Dendritic cell treated with granulocyte-macrophage colony-stimulating factor and Interleukin-4, amounts not matched to agents 40 ng/mL and 50 ng/mL, for 4 days (primary cell): ENCODE measurements at regions of chr2 and their contacts with region 1.

Region 1: DNA sequence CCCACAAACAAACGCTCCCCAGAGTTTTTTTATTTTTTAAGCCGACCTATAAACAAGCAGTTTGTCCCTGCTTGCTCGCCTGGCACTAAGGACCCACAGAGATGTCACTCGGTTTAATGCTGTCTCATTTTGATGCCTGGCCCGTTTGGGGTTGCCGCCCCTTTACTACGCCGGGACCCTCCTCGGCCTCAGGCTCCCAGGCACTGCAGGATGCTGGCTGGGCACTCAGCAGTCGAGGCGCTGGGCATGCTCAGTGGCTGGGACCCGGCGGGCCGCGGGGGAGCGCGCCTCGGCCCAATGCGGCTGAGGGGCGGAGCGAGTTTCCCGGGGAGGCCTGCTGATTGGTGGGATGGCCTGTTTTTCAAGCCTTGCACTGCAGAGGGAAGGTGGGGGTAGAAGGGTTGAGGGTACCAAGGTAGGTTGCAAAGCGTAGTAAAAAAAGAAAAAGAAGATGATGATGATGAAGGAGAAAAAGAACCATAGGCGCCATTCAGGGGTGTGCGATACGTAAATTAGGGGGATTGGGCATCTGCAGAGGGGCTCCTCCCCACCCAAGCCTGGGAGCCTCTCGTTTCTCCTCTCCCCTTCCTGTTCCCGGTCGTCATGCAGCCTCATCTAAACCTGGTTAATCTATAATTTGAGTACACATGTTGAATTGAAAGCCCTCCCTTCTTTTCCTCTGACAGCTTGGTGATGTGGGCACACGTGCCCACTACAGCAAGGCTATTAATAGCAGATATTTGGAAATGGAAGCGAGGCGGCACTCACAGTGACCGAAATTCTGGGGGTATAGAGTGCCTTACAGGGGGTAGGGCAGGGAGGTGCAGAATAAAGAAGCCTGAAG is 1.5 kb upstream of the IRS1 start:
- H3K4me3 Mint-ChIP-seq: peak overlapping the region; percentile 47
- H3K27ac Mint-ChIP-seq: no peak overlapping the region
- H3K4me1 Mint-ChIP-seq: peaks cover 32% of the 10 kb centered on the region
- H3K27me3 Mint-ChIP-seq: peaks cover 71% of the 10 kb centered on the region

Region 2: DNA sequence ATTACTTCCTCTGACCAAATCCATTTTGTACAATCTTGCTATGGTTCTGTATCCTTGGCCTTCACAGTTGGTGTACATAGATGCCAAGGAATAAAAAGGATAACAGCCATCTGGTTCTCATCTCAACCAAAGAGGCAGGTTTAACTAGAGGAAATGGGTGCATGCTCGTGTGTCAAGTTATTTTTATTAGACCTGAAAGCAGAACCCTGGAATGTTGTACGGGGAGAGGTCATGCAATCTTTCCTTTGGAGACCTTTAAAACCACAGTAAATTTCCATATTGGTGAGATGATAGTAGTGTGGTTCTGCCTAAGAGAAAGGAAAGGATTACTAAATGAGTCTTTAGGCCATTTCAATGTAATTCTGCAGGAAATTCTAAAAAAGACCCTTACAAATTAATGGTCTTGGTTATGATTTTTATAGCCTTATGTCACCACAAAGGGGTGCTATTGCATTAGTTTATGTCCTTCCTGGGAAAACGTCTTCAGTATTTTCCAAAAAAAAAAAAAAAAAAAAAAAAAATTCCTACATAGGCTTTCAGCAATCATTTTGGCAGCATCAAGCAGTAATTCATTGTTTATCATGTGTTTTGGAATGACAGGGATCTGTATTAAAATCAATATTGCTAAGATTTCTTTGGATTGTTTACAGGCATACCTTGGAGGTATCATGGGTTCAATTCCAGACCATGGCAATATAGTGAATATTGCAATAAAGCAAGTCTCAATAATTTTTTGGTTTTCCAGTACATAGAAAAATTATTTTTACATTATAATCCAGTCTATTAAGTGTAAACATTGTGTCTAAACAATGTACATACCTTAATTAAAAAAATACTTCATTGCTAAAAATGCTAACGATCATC is 1130.8 kb before region 1 on chr2:
- intact Hi-C with region 1: loop called (anchors 1 kb)
- H3K4me3 Mint-ChIP-seq: no peak overlapping the region
- H3K27ac Mint-ChIP-seq: no peak overlapping the region
- H3K4me1 Mint-ChIP-seq: no peaks in the 10 kb centered on the region
- H3K27me3 Mint-ChIP-seq: no peaks in the 10 kb centered on the region

Region 3: DNA sequence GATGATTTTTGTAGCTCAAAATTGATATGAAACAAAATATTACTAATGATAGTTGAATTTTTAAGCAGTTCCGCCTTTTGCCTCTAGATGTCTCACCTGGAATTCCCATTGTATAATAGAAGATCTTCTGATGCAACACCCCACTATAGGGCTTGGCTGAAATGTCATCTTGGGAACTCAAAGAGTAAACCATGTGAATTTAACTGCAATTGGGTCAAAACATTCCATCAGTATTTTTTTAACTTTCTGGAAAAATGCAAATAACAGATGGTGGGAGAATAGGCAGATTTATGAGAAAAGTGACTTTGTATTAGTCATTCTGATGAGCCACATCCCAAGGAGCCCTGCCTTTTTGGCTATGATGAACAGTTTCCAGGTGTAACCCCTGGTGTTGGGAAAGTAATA is 911.7 kb before region 1 on chr2:
- intact Hi-C with region 1: loop called (anchors 2 kb)
- H3K4me3 Mint-ChIP-seq: no peak overlapping the region
- H3K27ac Mint-ChIP-seq: no peak overlapping the region
- H3K4me1 Mint-ChIP-seq: no peaks in the 10 kb centered on the region
- H3K27me3 Mint-ChIP-seq: peaks cover 7% of the 10 kb centered on the region

Region 4: GRCh38 chr2:226215902-226216503 is 585.2 kb before region 1 on chr2:
- intact Hi-C with region 1: loop called (anchors 2 kb)
- H3K4me3 Mint-ChIP-seq: no peak overlapping the region
- H3K27ac Mint-ChIP-seq: no peak overlapping the region
- H3K4me1 Mint-ChIP-seq: no peaks in the 10 kb centered on the region
- H3K27me3 Mint-ChIP-seq: no peaks in the 10 kb centered on the region

Region 5: DNA sequence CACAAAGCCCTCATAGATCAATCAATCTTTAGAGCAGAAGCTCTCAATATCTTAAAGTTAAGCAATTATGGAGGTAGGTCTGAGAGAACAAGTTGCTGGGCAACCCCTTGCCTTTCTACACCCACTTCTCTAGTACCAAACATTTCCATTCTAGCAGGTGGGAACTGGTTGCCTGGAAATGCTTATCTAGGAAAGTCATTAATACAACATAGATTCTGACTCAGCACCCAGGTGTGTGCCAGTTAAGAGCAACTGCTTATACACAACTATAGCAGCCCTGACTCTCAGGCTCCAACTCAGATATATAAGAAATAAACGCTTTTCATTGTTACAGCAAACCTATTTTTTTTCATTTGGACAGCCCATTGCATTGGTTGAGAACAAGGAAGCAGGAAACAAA is 239.2 kb before region 1 on chr2:
- intact Hi-C with region 1: no loop called
- H3K4me3 Mint-ChIP-seq: no peak overlapping the region
- H3K27ac Mint-ChIP-seq: no peak overlapping the region
- H3K4me1 Mint-ChIP-seq: no peaks in the 10 kb centered on the region
- H3K27me3 Mint-ChIP-seq: no peaks in the 10 kb centered on the region